ENCODE measurements at regions of chr2 and their contacts with region 1.

Region 1: GRCh38 chr2:38076606-38077430 is 867 bp upstream of the CYP1B1 start:
- DNase-seq: peak; percentile 94
- H3K4me3 ChIP-seq: peak overlapping the region; percentile 69
- H3K27ac ChIP-seq: peak overlapping the region; percentile 98
- H3K4me1 ChIP-seq: peaks cover 45% of the 10 kb centered on the region
- H3K27me3 ChIP-seq: no peaks in the 10 kb centered on the region
- CTCF ChIP-seq: peak; percentile 77

Region 2: DNA sequence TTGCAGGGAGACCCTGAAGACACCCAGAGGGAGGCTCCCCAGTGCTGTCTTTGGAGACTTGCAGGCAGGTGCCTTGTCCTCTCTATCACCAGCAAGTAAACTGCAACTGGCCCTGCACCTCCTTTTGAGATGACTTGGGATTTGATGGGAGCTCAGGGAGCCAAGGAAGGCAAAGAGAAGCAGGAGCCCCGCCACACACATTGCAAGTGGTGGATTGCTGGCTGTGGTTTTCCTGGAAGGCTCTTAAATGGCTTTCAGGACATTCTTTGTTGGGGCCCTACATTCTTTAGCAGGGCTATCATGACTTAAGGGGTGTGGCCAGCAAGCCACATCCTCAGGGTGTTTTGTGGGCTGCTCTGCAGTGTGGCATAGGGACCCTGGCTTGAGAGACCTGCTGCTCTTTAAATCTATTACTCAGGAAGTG is 365.5 kb before region 1 on chr2:
- CTCF ChIA-PET with region 1: interaction called, 14 read pairs
- POLR2A ChIA-PET with region 1: no interaction called
- intact Hi-C with region 1: no loop called
- DNase-seq: peak; percentile 80 to 95
- H3K4me3 ChIP-seq: no peak overlapping the region
- H3K27ac ChIP-seq: peak overlapping the region; percentile 66
- H3K4me1 ChIP-seq: peaks cover 42% of the 10 kb centered on the region
- H3K27me3 ChIP-seq: no peaks in the 10 kb centered on the region
- CTCF ChIP-seq: no peak

Region 3: GRCh38 chr2:38013158-38013752 is 63.6 kb before region 1 on chr2:
- CTCF ChIA-PET with region 1: no interaction called
- POLR2A ChIA-PET with region 1: no interaction called
- intact Hi-C with region 1: loop called (anchors 5 kb)
- DNase-seq: peak in 1 of 2 experiments; percentile 97
- H3K4me3 ChIP-seq: peak overlapping the region; percentile 18
- H3K27ac ChIP-seq: peak overlapping the region; percentile 78
- H3K4me1 ChIP-seq: peaks cover 61% of the 10 kb centered on the region
- H3K27me3 ChIP-seq: no peaks in the 10 kb centered on the region
- CTCF ChIP-seq: no peak

Region 4: GRCh38 chr2:38115216-38116032 is 38.6 kb after region 1 on chr2:
- CTCF ChIA-PET with region 1: interaction called, 7 read pairs
- POLR2A ChIA-PET with region 1: interaction called, 10 read pairs
- intact Hi-C with region 1: loop called (anchors 1 kb)
- DNase-seq: peak; percentile 69 to 86
- H3K4me3 ChIP-seq: no peak overlapping the region
- H3K27ac ChIP-seq: peak overlapping the region; percentile 42
- H3K4me1 ChIP-seq: peaks cover 44% of the 10 kb centered on the region
- H3K27me3 ChIP-seq: no peaks in the 10 kb centered on the region
- CTCF ChIP-seq: peak; percentile 100

Region 5: GRCh38 chr2:38315707-38316333 is 239.0 kb after region 1 on chr2:
- CTCF ChIA-PET with region 1: interaction called, 15 read pairs
- POLR2A ChIA-PET with region 1: no interaction called
- intact Hi-C with region 1: no loop called
- DNase-seq: peak; percentile 23 to 55
- H3K4me3 ChIP-seq: no peak overlapping the region
- H3K27ac ChIP-seq: 0 out of 2 replicates have a peak overlapping the region, but pooled peaks have one; percentile 1
- H3K4me1 ChIP-seq: no peaks in the 10 kb centered on the region
- H3K27me3 ChIP-seq: no peaks in the 10 kb centered on the region
- CTCF ChIP-seq: peak; percentile 90